Cardiac septum (tissue), 1 donor: ENCODE measurements at regions of chrX and their contacts with region 1.

Region 1: DNA sequence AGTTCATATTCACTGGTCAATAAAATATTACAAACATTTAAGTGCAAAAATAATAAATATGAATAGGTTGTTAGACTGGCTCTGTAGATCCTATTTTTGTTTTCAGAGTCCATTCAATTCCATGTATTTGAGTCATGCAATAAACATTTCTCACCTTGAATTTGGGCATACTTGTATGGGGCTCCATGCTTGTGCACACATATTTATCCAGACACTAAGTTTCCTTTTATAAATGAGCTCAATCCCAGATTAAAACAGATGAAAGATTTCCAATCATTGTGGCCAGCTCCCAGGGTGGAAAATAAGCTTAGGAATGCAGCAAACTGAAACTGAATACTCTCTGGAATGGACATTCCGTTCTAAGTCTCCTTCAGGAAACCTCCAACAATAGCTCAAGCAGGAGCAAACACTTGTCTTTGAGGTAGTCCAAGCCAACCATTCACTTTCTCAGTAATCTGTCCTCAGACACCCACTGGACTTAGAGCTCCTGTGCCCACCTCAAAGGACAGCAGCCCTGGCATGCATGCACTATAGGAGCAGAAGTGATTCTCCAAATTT is 16.4 kb downstream of the DMD start:
- DNase-seq: no peak

Region 2: GRCh38 chrX:32530802-32531403 is 664.1 kb before region 1 on chrX:
- intact Hi-C with region 1: loop called (anchors 5 kb)
- DNase-seq: no peak

Region 3: DNA sequence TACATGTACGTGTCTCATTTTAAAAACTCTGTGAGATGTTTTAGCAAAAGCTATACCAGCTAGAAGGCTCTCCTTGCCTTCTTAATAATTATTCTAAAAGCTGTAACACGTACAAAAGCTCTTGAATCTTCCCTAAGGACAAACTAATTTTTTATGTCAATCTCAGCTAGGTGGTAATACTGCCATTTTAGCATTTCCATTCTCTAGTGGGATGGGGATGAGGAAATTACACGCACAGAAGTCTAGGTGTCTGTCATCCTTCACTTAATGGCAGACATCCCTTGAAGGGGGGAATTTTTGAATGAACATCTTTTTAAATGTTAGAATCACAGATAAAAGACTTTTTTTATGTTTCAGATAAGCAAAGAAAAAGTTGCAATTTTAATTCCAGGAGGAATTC is 552.7 kb before region 1 on chrX:
- intact Hi-C with region 1: no loop called
- DNase-seq: no peak